ENCODE measurements at regions of chr10 and their contacts with region 1.

Region 1: GRCh38 chr10:99845837-99846382 is 63.5 kb downstream of the ABCC2 start:
- DNase-seq: peak; percentile 82
- H3K4me3 Mint-ChIP-seq: no peak overlapping the region
- H3K27ac Mint-ChIP-seq: no peak overlapping the region
- H3K4me1 Mint-ChIP-seq: peaks cover 4% of the 10 kb centered on the region
- H3K27me3 Mint-ChIP-seq: no peaks in the 10 kb centered on the region

Region 2: DNA sequence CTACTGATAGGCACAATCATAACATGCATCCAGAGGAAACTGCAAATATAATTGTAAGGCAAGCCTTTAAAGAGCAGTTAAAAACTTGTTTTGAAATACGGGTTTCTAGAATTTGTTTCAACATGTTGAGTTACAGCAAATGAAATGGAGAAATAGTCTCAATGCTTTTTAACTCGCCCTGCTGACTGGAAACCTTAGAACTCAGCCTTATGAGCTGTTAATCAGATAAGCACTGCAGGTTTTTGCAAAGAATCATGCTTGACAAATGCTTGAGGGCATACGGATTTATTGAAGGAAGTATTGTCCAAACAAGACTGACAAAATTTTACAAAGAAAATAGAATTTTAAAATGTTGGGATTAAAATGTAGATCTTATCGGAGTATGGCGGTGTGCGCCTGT is 191.1 kb before region 1 on chr10:
- CTCF ChIA-PET with region 1: no interaction called
- intact Hi-C with region 1: no loop called
- DNase-seq: no peak
- H3K4me3 Mint-ChIP-seq: no peak overlapping the region
- H3K27ac Mint-ChIP-seq: no peak overlapping the region
- H3K4me1 Mint-ChIP-seq: peaks cover 10% of the 10 kb centered on the region
- H3K27me3 Mint-ChIP-seq: peaks cover 19% of the 10 kb centered on the region

Region 3: GRCh38 chr10:99966306-99966705 is 120.4 kb after region 1 on chr10:
- CTCF ChIA-PET with region 1: interaction called, 9 read pairs
- intact Hi-C with region 1: loop called (anchors 5 kb)
- DNase-seq: no peak
- H3K4me3 Mint-ChIP-seq: no peak overlapping the region
- H3K27ac Mint-ChIP-seq: no peak overlapping the region
- H3K4me1 Mint-ChIP-seq: no peaks in the 10 kb centered on the region
- H3K27me3 Mint-ChIP-seq: no peaks in the 10 kb centered on the region

Region 4: GRCh38 chr10:99993701-99994689 is 148.1 kb after region 1 on chr10:
- CTCF ChIA-PET with region 1: interaction called, 16 read pairs
- intact Hi-C with region 1: no loop called
- DNase-seq: peak; percentile 84
- H3K4me3 Mint-ChIP-seq: peak overlapping the region; percentile 18
- H3K27ac Mint-ChIP-seq: peak overlapping the region; percentile 11
- H3K4me1 Mint-ChIP-seq: peaks cover 19% of the 10 kb centered on the region
- H3K27me3 Mint-ChIP-seq: no peaks in the 10 kb centered on the region

Region 5: GRCh38 chr10:100239851-100240250 is 393.9 kb after region 1 on chr10:
- CTCF ChIA-PET with region 1: no interaction called
- intact Hi-C with region 1: loop called (anchors 5 kb)
- DNase-seq: no peak
- H3K4me3 Mint-ChIP-seq: no peak overlapping the region
- H3K27ac Mint-ChIP-seq: no peak overlapping the region
- H3K4me1 Mint-ChIP-seq: peaks cover 3% of the 10 kb centered on the region
- H3K27me3 Mint-ChIP-seq: no peaks in the 10 kb centered on the region

Region 6: DNA sequence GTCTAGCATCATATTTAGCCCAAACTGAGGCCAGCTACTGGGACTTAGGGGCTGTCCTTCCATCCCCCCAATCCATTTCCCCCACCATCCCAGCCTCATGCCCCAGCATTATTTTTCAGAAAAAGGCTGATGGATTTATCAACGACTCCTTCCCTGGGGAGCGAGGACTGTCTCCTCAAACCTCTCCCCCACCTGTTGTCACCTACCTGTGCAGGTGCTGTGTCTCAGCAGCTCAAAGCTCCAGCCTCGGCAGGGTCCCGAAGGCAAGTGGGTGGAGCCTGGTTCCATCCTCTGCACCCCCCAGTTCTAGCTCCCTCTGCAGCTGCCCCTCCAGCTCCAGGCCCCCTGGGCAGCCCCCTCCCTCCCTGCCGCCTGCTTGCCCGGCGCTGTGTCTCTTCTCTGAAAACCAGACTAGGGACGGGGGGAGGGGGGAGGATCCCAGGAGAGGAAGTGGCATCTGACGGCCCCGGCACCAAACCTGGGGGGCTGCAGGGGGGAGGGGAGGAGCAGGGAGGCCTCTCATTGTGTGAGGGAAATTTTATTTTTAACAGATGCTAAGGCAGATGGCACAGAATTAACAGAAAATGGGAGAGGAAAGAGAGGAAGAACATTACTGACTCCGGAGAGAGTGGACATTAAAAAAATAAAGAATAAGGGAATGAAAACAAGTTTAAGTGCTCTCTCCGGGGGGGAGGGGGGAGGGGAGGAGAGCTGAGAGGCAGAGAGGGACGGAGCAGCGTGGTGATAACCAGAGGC is 837.8 kb after region 1 on chr10:
- CTCF ChIA-PET with region 1: no interaction called
- intact Hi-C with region 1: no loop called
- DNase-seq: no peak
- H3K4me3 Mint-ChIP-seq: no peak overlapping the region
- H3K27ac Mint-ChIP-seq: no peak overlapping the region
- H3K4me1 Mint-ChIP-seq: no peaks in the 10 kb centered on the region
- H3K27me3 Mint-ChIP-seq: peaks cover 70% of the 10 kb centered on the region

Measured in activated naive CD4-positive, alpha-beta T cell treated with anti-CD3 and anti-CD28 coated beads for 36 hours (primary cell).